ENCODE measurements at regions of chr11 and their contacts with region 1.

Region 1: DNA sequence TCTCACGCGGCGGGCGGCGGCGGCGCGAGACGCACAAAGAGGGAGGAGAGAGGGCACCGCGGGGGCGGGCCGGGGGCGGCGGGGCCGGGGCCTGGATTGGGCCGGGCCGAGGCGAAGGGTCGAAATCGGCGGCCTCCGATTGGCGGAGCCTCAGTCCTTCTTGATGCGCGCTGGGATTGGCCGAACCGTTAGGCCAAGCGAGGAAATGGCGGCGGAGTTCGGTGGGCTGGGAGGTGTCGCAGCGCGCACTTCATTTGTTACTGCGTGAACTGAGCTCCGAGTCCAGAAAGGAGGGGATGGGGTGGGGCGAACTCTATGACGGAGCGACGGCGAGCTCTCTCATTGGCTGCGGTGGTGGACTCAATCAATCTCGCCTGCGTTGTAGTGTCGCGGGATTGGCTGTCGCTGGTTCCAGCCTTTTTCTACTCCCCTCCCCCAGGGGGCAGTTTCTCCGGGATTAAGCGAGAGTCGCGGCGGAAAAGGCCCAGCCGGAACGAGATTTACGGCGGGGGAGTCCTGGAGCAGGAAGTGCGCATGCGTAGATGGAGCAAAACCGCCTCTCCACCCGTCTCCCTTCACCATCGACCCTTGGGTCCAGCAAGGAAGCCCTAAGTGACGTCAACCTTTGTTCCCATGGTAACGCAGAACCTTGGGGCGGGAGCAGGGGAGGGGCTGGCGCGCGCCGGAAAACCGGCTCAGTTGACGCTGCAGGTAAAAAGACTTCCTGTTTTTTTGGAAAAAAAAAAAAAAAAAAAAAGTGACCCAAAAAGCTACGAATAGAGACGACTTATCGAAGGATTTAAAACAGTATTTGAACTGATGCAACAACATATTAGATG is at the start of gene SF1:
- DNase-seq: peak; percentile 100
- ATAC-seq: peak; percentile 90
- H3K4me3 Mint-ChIP-seq: peak within 1 kb of the TSS; percentile 95
- H3K27ac Mint-ChIP-seq: peak within 1 kb of the TSS; percentile 96
- H3K4me1 Mint-ChIP-seq: peaks cover 46% of the 10 kb centered on the region
- H3K27me3 Mint-ChIP-seq: no peaks in the 10 kb centered on the region
- CTCF ChIP-seq: no peak
- total RNA-seq, gene SF1: 325 to 342 TPM

Region 2: GRCh38 chr11:64767344-64768299 is 11.1 kb before region 1 on chr11:
- CTCF ChIA-PET with region 1: interaction called, 35 read pairs
- POLR2A ChIA-PET with region 1: interaction called, 308 read pairs
- intact Hi-C with region 1: no loop called
- DNase-seq: peak; percentile 95
- ATAC-seq: peak; percentile 48
- H3K4me3 Mint-ChIP-seq: no peak overlapping the region
- H3K27ac Mint-ChIP-seq: peak overlapping the region; percentile 86
- H3K4me1 Mint-ChIP-seq: peaks cover 91% of the 10 kb centered on the region
- H3K27me3 Mint-ChIP-seq: no peaks in the 10 kb centered on the region
- CTCF ChIP-seq: peak; percentile 94